Activated B cell treated with CpG ODN at 0.5 μM for 24 hours (primary cell): ENCODE measurements at regions of chr2 and their contacts with region 1.

Region 1: GRCh38 chr2:165015052-165015642 is 59.8 kb upstream of the SLC38A11 start:
- DNase-seq: no peak
- ATAC-seq: peak; percentile 35
- H3K4me3 Mint-ChIP-seq: no peak overlapping the region
- H3K27ac Mint-ChIP-seq: no peak overlapping the region
- H3K4me1 Mint-ChIP-seq: no peaks in the 10 kb centered on the region
- H3K27me3 Mint-ChIP-seq: no peaks in the 10 kb centered on the region
- CTCF ChIP-seq: peak; percentile 82

Region 2: DNA sequence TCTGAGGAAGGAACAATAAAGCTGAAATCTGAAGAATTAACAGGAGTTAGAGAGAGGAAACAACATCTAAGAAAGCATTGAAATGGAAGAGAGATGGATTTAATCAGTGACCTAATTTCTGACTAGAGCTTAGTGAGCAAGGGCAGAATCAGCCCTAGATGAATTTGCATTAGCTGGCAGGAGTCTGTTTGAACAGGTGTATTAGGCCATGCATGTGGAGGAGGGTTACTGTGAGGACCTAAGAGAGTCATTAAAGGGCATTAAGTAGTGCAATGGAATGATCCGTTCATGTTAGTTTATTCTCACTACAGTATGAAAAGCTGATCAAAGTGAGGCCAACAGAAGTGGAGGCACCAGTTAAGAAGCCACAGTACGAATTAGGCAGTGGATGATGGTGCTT is 679.2 kb before region 1 on chr2:
- CTCF ChIA-PET with region 1: no interaction called
- POLR2A ChIA-PET with region 1: no interaction called
- intact Hi-C with region 1: no loop called
- DNase-seq: no peak
- ATAC-seq: no peak
- H3K4me3 Mint-ChIP-seq: no peak overlapping the region
- H3K27ac Mint-ChIP-seq: no peak overlapping the region
- H3K4me1 Mint-ChIP-seq: no peaks in the 10 kb centered on the region
- H3K27me3 Mint-ChIP-seq: no peaks in the 10 kb centered on the region
- CTCF ChIP-seq: no peak

Region 3: GRCh38 chr2:165067958-165068757 is 53.0 kb after region 1 on chr2:
- CTCF ChIA-PET with region 1: no interaction called
- POLR2A ChIA-PET with region 1: no interaction called
- intact Hi-C with region 1: no loop called
- DNase-seq: no peak
- ATAC-seq: no peak
- H3K4me3 Mint-ChIP-seq: no peak overlapping the region
- H3K27ac Mint-ChIP-seq: no peak overlapping the region
- H3K4me1 Mint-ChIP-seq: no peaks in the 10 kb centered on the region
- H3K27me3 Mint-ChIP-seq: peaks cover 2% of the 10 kb centered on the region
- CTCF ChIP-seq: no peak

Region 4: DNA sequence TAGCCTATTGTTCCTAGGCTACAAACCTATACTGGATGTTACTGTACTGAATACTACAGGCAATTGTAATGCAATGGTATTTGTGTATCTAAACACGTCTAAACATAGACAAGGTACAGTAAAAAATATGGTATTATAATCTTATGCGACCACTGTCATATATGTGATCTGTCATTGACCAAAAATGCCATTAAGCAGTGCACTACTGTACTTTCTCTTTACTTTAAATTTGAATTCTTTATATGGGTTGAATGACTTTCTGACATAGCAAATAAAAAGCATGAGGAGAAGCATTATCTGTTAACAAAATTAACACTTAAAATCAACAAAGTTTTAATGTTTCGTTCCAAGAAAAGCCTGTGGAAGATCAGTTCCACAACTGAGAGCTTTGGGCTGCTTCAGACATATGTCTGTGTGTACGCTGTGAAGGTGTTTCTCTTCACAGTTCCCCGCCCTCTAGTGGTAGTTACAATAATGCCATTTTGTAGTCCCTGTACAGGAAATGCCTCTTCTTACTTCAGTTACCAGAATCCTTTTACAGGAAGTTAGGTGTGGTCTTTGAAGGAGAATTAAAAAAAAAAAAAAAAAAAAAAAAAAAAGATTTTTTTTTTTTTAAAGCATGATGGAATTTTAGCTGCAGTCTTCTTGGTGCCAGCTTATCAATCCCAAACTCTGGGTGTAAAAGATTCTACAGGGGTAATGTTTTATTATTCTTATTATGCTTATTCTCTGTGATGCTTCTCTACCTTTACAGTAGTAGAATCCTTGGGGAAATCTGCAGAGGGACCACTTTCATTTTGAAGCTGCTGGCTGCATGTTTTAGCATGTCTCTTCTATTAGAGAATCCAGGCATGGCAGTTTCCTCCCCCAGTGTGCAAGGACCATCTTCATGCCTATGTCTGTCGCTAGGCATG is 278.6 kb after region 1 on chr2:
- CTCF ChIA-PET with region 1: interaction called, 12 read pairs
- POLR2A ChIA-PET with region 1: no interaction called
- intact Hi-C with region 1: loop called (anchors 1 kb)
- DNase-seq: no peak
- ATAC-seq: peak; percentile 100
- H3K4me3 Mint-ChIP-seq: no peak overlapping the region
- H3K27ac Mint-ChIP-seq: no peak overlapping the region
- H3K4me1 Mint-ChIP-seq: peaks cover 4% of the 10 kb centered on the region
- H3K27me3 Mint-ChIP-seq: peaks cover 7% of the 10 kb centered on the region
- CTCF ChIP-seq: no peak

Region 5: GRCh38 chr2:165757906-165758675 is 742.9 kb after region 1 on chr2:
- CTCF ChIA-PET with region 1: no interaction called
- POLR2A ChIA-PET with region 1: no interaction called
- intact Hi-C with region 1: loop called (anchors 10 kb)
- DNase-seq: no peak
- ATAC-seq: no peak
- H3K4me3 Mint-ChIP-seq: no peak overlapping the region
- H3K27ac Mint-ChIP-seq: no peak overlapping the region
- H3K4me1 Mint-ChIP-seq: no peaks in the 10 kb centered on the region
- H3K27me3 Mint-ChIP-seq: no peaks in the 10 kb centered on the region
- CTCF ChIP-seq: no peak